Mammary epithelial cell (primary cell): ENCODE measurements at regions of chr15 and their contacts with region 1.

Region 1: DNA sequence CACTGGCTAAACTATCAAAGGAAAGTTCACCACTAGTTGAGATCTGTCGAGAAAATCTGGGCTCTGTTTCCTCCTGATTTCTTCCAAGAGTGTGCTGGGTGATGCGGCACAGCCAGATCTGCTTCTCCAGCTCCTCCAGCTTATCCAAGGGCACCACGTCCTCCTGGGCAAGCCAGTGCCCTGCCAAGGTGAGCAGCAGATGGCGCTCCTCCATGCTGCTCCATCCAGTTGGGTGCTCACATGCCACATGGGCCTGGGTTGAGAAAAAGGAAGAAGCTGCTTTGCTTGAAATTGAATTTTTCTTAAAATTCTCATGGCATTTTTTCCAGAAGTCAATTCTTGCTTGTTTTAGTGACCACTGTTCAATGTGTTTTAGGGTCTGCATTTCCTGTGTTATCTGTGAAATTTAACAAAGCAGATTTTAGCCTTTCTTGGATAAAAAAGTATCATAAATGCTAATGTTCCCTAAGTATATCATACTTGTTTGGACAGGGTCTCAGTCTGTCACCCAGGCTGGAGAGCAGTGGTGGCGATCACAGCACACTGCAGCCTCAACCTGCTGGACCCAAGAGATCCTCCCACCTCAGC is 47.3 kb downstream of the EIF3J start:
- DNase-seq: peak; percentile 35
- H3K4me3 ChIP-seq: no peak overlapping the region
- H3K27ac ChIP-seq: no peak overlapping the region
- H3K4me1 ChIP-seq: no peaks in the 10 kb centered on the region
- H3K27me3 ChIP-seq: no peaks in the 10 kb centered on the region
- CTCF ChIP-seq: peak; percentile 61 to 70

Region 2: DNA sequence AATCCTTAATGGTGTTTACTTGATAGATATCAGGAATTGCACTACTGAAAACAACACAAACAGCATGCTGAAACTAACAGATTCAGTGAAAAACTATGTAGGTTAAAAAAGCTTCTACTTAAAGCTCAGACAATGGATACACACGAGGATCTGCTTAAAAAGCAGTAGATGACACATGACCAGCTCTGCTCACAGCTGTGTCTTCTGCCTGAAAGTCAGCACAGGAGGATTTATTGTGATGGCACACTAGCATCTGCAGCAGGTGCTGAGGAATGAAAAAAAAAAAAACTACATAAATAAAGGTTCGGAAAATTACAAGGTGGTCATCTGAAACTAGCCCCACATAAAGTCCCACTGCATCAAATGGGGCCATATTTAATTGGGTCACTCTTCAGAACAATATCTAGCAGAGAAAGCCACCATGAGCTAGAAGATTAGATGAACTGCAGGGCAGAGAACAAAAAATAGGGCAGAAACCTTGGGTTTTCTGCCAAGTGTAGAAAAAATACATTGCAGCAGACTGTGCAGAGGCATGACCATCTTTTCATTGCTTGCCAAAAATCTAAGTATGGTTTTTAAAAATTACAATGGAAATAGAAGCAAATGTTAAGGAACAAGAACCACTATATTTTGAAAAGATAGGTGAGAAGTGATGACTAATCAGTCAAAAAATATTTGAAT is 309.0 kb before region 1 on chr15:
- CTCF ChIA-PET with region 1: interaction called, 17 read pairs
- dilution Hi-C with region 1: no loop called
- in situ Hi-C with region 1: no loop called
- intact Hi-C with region 1: no loop called
- DNase-seq: no peak
- H3K4me3 ChIP-seq: no peak overlapping the region
- H3K27ac ChIP-seq: no peak overlapping the region
- H3K4me1 ChIP-seq: no peaks in the 10 kb centered on the region
- H3K27me3 ChIP-seq: no peaks in the 10 kb centered on the region
- CTCF ChIP-seq: no peak

Region 3: DNA sequence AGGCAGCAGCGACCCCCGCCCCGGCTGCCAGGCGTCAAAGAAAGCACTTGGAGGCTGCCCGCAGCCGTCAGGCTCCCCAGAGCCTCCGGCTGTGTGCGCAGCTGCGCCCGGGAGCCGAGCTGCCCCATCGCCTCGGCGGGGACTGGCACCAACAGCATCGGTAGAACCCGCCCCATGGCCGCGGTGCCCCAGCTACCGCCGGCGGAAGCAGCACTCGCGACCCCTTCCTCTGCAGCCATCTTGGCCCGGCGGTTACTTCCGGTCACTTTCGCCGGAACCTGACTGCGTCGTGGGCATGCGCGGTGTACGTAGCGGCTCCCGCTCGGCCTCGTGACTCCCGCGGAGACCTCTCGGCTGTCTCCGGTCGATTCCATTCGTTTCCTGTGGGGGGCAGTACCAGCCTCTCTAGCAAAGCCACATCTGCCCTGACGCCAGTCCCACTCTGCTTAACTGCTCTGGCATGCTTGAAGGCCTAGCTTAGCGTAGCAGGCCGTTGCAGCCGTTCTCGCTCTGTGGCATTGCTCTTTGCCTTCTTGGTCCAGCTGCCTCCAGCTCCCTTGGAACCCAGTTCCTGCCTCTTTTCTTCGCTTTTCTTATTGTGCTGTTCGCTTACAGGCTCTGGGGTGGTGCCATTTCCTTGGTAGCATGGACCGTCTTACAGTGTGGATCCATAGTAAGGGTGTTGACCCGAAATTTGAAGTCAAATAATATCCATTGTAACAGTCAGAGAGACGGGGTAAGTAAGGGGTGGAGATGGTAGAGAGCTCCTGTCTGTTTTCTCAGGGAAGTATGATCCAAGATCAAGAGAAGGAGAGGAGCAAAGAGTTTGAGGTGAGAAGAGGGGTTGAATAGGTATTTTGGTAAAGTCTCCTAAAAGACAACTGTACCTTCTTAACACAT is 79.4 kb after region 1 on chr15 and contains the start of gene SPG11:
- CTCF ChIA-PET with region 1: no interaction called
- dilution Hi-C with region 1: no loop called
- in situ Hi-C with region 1: no loop called
- intact Hi-C with region 1: loop called (anchors 5 kb)
- DNase-seq: peak; percentile 94
- H3K4me3 ChIP-seq: peak within 1 kb of the TSS; percentile 67 to 89 (median 82)
- H3K27ac ChIP-seq: peak within 1 kb of the TSS; percentile 58
- H3K4me1 ChIP-seq: peaks cover 15% of the 10 kb centered on the region
- H3K27me3 ChIP-seq: no peaks in the 10 kb centered on the region
- CTCF ChIP-seq: peak; percentile 80 to 82
- total RNA-seq, gene SPG11: 55.4 to 76.2 TPM

Region 4: DNA sequence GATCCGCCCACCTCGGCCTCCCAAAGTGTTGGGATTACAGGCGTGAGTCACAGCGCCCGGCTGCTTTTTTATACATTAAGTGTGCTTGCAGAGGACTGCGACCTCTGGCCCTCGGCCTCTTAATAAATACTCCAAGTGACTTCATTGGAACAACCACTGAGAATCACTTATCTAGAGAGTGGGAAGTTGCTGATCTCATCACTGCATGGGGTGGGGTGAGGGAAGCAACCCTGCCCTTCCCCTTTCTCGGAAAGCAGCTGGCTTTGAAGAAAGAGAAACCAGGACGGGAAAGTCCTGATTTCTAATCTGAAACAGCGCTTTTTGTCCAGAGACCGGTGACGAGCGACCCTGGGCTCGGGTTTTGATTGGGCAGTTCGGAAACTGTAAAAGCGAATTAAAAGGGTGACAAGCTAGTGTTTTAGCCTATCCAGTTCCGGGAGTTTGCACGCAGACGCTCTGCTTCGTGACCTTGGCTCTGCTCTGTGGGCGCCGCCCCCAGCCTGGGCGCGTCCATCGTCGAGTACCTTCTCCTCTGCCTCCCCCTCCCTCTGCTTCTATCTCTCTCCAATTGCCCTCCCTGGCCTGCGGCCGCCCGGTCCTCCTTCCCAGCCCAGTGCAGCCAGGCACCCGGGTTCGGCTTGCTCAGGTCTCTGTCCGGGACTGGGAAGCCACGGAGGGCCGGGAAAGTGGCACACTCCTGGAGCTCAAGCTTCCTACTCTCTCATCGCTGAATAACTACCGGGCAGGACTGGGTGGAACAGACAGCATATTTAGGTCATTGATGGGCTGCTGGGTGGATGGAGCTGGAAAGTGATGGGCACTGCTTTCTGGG is 144.5 kb after region 1 on chr15:
- CTCF ChIA-PET with region 1: no interaction called
- dilution Hi-C with region 1: no loop called
- in situ Hi-C with region 1: loop called in 1 of 2 experiments (anchors 25 kb)
- intact Hi-C with region 1: no loop called
- DNase-seq: peak; percentile 99
- H3K4me3 ChIP-seq: peak overlapping the region; percentile 70 to 83 (median 76)
- H3K27ac ChIP-seq: peak overlapping the region; percentile 91
- H3K4me1 ChIP-seq: peaks cover 20% of the 10 kb centered on the region
- H3K27me3 ChIP-seq: no peaks in the 10 kb centered on the region
- CTCF ChIP-seq: no peak

Region 5: DNA sequence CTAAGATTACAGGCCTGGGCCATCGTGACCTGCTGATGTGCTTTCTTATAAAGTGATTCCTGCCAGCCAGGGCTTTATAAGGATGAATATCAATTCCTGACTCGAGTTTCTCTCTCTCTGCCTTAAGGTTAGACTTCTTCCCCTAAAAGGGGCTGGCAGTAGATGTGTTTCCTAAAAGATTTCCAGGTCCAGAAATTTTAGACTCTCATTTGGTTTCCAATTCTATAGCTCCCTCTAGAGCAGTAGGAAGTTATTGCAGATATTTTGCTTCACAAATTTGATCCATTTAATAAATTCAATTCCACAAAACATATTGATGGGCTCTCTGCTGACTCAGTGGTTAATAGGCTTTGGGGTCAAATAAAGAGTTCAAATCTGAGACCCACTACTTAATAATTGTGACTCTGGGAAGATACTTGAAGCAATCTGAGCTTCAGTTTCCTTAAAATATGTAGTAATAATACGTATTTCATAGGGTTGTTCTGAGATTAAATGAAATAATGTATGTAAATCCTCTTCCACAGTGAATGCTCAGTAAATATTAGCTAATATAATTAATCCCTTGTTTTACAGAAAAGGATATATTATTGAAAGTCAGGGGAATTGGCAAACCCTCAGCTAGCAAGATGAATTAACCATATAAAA is 154.2 kb after region 1 on chr15:
- CTCF ChIA-PET with region 1: interaction called, 5 read pairs
- dilution Hi-C with region 1: no loop called
- in situ Hi-C with region 1: loop called in 1 of 2 experiments (anchors 25 kb)
- intact Hi-C with region 1: loop called (anchors 2 kb)
- DNase-seq: peak; percentile 35
- H3K4me3 ChIP-seq: no peak overlapping the region
- H3K27ac ChIP-seq: no peak overlapping the region
- H3K4me1 ChIP-seq: no peaks in the 10 kb centered on the region
- H3K27me3 ChIP-seq: no peaks in the 10 kb centered on the region
- CTCF ChIP-seq: peak; percentile 68 to 75

Region 6: GRCh38 chr15:44788748-44789147 is 204.5 kb after region 1 on chr15:
- CTCF ChIA-PET with region 1: interaction called, 14 read pairs
- dilution Hi-C with region 1: no loop called
- in situ Hi-C with region 1: no loop called
- intact Hi-C with region 1: no loop called
- DNase-seq: no peak
- H3K4me3 ChIP-seq: no peak overlapping the region
- H3K27ac ChIP-seq: no peak overlapping the region
- H3K4me1 ChIP-seq: peaks cover 3% of the 10 kb centered on the region
- H3K27me3 ChIP-seq: no peaks in the 10 kb centered on the region
- CTCF ChIP-seq: no peak